Esophagus squamous epithelium (tissue), 5 donors: ENCODE measurements at regions of chr6 and their contacts with region 1.

Region 1: DNA sequence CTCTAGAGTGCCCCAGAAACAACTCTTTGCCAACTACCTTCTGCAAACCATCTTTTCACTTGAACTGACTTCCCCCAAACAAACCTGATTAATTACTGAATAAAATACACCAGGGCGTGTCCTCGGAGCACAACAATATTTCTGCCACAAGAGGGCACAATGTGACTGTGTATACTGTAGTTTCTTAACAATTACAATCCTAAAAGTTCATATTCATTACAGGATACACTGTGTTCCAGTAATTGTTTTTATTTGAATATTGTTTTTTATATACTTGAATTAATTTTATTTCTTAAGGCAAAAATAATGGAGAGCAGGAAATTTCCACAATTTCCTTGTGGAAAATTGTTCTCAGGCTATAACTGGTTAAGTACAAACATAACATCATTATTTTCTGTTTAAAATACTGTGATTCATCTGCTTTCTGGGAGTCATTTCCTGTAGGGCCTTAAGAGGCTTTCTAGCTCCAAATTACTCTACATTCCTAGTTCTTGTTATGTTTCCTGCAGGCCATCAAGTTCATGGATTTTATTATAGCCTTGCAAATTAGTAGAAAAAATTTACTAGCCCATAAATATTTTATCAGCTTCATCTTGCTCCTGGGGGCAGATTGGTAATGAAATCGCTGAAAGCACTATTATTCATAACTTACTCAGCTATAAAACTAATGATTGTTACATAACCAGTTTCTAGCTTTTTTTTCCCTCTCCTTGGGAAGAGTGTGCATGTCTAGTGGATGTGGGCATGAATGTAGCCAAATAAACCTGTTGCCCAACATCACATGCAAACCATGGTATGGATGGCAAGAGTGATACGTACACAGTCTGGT is 51.9 kb upstream of the SLC22A16 start:
- DNase-seq: no peak
- H3K4me3 ChIP-seq: no peak overlapping the region
- H3K27ac ChIP-seq: peak overlapping the region in 2 of 4 donors; percentile 23 to 47
- H3K4me1 ChIP-seq: peaks cover 4 to 11% (median 6%) of the 10 kb centered on the region in 3 donors
- H3K27me3 ChIP-seq: no peaks in the 10 kb centered on the region
- CTCF ChIP-seq: peak; percentile 42 to 85 (median 78)
- POLR2A ChIP-seq: no peak

Region 2: GRCh38 chr6:110439356-110439755 is 89.0 kb before region 1 on chr6:
- intact Hi-C with region 1: no loop called
- DNase-seq: no peak
- H3K4me3 ChIP-seq: no peak overlapping the region
- H3K27ac ChIP-seq: no peak overlapping the region
- H3K4me1 ChIP-seq: no peaks in the 10 kb centered on the region
- H3K27me3 ChIP-seq: no peaks in the 10 kb centered on the region
- CTCF ChIP-seq: no peak
- POLR2A ChIP-seq: no peak

Region 3: DNA sequence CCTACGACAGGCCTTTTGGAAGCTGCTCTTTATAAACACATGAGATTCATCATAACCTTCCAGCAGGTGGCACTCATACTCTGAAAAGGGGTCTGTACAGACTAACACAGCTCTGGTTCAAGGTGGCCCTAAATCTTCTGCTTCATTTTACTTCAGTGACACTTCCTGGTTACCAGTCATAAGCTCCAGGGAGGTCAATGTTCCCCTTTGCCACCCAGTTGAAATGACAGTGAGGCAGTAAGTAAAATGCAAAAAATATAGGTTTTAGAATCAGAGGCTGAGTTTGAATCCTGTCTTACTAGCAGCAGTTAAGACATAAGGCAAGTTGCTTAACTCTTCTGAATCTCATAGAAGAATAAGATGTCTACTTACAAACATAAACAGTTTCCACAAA is 154.1 kb after region 1 on chr6:
- intact Hi-C with region 1: loop called (anchors 10 kb)
- DNase-seq: no peak
- H3K4me3 ChIP-seq: no peak overlapping the region
- H3K27ac ChIP-seq: no peak overlapping the region
- H3K4me1 ChIP-seq: peaks cover 0 to 19% (median 0%) of the 10 kb centered on the region in 3 donors
- H3K27me3 ChIP-seq: no peaks in the 10 kb centered on the region
- CTCF ChIP-seq: peak; percentile 57 to 84 (median 72)
- POLR2A ChIP-seq: no peak

Region 4: GRCh38 chr6:110944681-110945151 is 416.4 kb after region 1 on chr6:
- intact Hi-C with region 1: loop called (anchors 10 kb)
- DNase-seq: no peak
- H3K4me3 ChIP-seq: no peak overlapping the region
- H3K27ac ChIP-seq: peak overlapping the region in 3 of 4 donors; percentile 40 to 55 (median 48)
- H3K4me1 ChIP-seq: peaks cover 0 to 19% (median 0%) of the 10 kb centered on the region in 3 donors
- H3K27me3 ChIP-seq: no peaks in the 10 kb centered on the region
- CTCF ChIP-seq: no peak
- POLR2A ChIP-seq: no peak

Region 5: DNA sequence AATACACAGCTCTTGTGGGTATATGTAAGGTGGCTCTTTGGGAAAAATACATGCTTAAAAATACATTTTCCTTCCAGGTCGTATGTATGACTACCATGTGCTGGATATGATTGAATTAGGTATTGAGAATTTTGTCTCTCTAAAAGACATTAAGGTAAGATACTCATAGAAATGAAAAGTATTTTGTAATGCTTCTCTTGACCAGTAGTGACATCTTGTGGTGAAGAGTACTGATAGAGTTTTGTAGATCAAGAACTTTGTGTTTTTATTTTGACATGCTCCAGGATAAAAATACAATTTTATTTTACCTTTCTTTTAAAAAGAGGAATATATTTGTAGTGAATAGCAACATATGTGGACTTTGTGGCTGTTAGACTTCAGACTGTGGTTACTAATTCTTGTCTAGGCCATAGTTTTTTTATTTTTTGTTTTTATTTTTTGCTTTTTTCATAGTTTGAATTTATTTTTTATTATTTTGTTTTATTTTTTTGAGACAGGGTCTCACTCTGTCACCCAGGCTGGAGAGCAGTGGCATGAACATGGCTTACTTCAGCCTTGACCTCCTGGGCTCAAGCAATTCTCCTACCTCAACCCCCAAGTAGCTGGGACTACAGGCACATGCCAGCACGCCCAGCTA is 471.4 kb after region 1 on chr6:
- intact Hi-C with region 1: loop called (anchors 10 kb)
- DNase-seq: no peak
- H3K4me3 ChIP-seq: no peak overlapping the region
- H3K27ac ChIP-seq: no peak overlapping the region
- H3K4me1 ChIP-seq: peaks cover 0 to 6% (median 0%) of the 10 kb centered on the region in 3 donors
- H3K27me3 ChIP-seq: no peaks in the 10 kb centered on the region
- CTCF ChIP-seq: peak in 4 of 6 experiments; percentile 17 to 59 (median 38)
- POLR2A ChIP-seq: no peak